AG04449 (cell line): ENCODE measurements at regions of chrX and their contacts with region 1.

Region 1: DNA sequence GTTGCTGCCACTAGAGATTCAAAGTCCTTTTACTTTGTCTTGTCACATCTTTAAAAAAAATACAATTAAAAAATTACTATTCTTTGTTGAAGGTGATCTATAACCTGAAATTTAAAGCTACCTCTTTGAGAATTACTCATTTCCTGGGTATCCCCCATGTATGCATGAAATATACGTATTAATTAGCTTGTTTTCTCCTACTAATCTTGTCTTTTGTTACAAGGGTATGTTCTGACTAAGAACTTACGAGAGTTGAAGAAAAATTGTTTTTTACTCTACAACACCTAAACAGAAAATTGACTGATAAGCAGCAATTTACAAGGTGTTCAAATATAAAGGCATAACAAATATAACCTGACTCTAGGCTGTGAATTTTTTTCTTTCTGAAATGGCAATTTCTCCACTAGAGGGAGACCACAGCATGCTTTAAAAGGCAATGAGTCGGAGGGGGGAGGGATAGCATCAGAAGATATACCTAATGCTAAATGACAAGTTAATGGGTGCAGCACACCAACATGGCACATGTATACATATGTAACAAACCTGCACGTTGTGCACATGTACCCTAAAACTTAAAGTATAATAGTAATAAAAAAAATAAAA is 249.6 kb downstream of the OPHN1 start:
- DNase-seq: no peak
- H3K4me3 ChIP-seq: no peak overlapping the region
- CTCF ChIP-seq: peak; percentile 37

Region 2: DNA sequence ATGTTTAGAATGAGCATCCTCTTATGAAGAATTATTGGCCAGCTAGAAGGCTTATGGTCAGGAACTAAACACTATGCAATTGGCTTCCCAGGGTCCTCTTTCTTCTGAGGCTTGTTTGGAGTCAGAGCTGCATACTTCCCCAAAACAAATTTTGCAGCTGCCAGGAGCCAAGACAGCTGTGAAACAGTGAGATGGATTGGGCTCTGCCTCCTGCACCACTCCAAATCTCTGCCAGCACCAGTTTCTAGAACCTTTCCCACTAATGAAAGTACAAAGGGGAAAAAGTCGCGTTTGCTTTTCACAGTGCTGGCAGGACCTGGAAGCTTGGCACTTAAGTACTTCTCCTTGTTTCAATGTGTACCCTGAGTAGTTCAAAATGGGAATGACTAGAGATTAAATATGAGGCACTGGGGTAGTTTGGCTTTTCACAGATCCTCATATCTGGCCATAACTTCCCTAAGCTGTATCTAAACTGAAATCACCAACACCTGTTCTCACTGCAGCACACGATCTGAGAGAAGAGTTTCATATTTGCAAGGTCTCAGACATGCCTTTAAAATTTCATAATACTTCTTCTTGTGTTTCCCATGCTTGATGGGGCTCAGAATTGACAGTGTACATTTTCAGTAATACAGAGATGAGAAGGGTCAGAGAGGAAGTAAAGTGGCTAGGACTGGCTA is 660.6 kb before region 1 on chrX:
- CTCF ChIA-PET with region 1: no interaction called
- POLR2A ChIA-PET with region 1: no interaction called
- DNase-seq: no peak
- H3K4me3 ChIP-seq: no peak overlapping the region
- CTCF ChIP-seq: no peak

Region 3: DNA sequence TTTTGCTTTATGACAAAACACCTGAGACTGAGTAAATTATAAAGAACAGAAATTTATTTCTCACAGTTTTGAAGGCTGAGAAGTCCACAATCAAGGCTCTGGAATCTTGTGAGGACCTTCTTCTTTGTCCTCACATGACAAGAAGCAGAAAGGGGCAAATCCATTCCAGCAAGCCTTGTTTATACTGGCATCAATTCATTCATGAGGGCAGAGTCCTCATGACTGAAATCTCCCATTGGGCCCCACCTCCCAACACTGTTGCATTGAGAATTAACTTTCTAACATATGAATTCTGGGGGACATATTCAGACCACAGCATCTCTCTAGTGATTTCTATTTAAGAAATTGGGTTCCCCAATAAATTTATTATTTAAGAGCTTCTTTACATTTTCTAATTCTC is 244.4 kb before region 1 on chrX:
- CTCF ChIA-PET with region 1: no interaction called
- POLR2A ChIA-PET with region 1: no interaction called
- DNase-seq: no peak
- H3K4me3 ChIP-seq: no peak overlapping the region
- CTCF ChIP-seq: no peak

Region 4: GRCh38 chrX:68490599-68490998 is 306.9 kb after region 1 on chrX:
- CTCF ChIA-PET with region 1: interaction called, 13 read pairs
- POLR2A ChIA-PET with region 1: no interaction called
- DNase-seq: no peak
- H3K4me3 ChIP-seq: no peak overlapping the region
- CTCF ChIP-seq: peak; percentile 30